Activated CD8-positive, alpha-beta T cell treated with anti-CD3 and anti-CD28 coated beads, Interleukin-2, amount 10 ng/mL, durations not matched to agents 7 days and 5 days (primary cell): ENCODE measurements at regions of chr1 and their contacts with region 1.

Region 1: GRCh38 chr1:159214149-159214760 is 9.6 kb downstream of the ACKR1 start:
- DNase-seq: peak; percentile 45
- ATAC-seq: no peak
- H3K4me3 Mint-ChIP-seq: no peak overlapping the region
- H3K27ac Mint-ChIP-seq: no peak overlapping the region
- H3K4me1 Mint-ChIP-seq: no peaks in the 10 kb centered on the region
- H3K27me3 Mint-ChIP-seq: peaks cover 12% of the 10 kb centered on the region

Region 2: DNA sequence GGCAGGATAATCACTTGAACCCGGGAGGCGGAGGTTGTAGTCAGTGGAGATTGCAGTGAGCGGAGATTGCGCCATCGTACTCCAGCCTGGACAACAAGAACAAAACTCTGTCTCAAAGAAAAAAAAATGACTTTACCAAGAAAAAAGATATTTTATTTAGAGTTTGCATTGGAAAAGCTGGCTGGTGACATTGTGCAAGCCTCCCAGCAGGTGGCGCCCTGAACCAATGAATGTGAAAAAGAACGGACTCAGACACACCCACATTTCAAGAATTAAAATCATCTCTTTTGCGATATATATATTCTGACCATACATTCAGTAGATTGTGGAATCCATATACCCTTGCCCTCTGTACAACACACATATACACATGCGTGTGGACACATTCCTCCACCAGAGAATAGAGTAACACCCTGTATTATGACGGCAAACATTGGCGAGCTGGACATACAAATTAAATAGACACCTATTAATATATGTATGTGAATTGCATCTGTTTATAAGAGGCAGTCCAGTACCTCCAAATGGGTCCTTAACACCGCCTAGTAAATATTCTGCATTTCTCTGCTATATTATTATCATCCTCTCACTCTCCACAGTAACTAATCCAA is 81.9 kb before region 1 on chr1:
- CTCF ChIA-PET with region 1: interaction called, 54 read pairs
- POLR2A ChIA-PET with region 1: no interaction called
- DNase-seq: peak; percentile 74
- ATAC-seq: no peak
- H3K4me3 Mint-ChIP-seq: no peak overlapping the region
- H3K27ac Mint-ChIP-seq: no peak overlapping the region
- H3K4me1 Mint-ChIP-seq: no peaks in the 10 kb centered on the region
- H3K27me3 Mint-ChIP-seq: peaks cover 4% of the 10 kb centered on the region

Region 3: GRCh38 chr1:159161001-159161718 is 53.1 kb before region 1 on chr1:
- CTCF ChIA-PET with region 1: interaction called, 29 read pairs
- POLR2A ChIA-PET with region 1: no interaction called
- DNase-seq: peak; percentile 68
- ATAC-seq: peak; percentile 84
- H3K4me3 Mint-ChIP-seq: no peak overlapping the region
- H3K27ac Mint-ChIP-seq: no peak overlapping the region
- H3K4me1 Mint-ChIP-seq: no peaks in the 10 kb centered on the region
- H3K27me3 Mint-ChIP-seq: peaks cover 40% of the 10 kb centered on the region

Region 4: DNA sequence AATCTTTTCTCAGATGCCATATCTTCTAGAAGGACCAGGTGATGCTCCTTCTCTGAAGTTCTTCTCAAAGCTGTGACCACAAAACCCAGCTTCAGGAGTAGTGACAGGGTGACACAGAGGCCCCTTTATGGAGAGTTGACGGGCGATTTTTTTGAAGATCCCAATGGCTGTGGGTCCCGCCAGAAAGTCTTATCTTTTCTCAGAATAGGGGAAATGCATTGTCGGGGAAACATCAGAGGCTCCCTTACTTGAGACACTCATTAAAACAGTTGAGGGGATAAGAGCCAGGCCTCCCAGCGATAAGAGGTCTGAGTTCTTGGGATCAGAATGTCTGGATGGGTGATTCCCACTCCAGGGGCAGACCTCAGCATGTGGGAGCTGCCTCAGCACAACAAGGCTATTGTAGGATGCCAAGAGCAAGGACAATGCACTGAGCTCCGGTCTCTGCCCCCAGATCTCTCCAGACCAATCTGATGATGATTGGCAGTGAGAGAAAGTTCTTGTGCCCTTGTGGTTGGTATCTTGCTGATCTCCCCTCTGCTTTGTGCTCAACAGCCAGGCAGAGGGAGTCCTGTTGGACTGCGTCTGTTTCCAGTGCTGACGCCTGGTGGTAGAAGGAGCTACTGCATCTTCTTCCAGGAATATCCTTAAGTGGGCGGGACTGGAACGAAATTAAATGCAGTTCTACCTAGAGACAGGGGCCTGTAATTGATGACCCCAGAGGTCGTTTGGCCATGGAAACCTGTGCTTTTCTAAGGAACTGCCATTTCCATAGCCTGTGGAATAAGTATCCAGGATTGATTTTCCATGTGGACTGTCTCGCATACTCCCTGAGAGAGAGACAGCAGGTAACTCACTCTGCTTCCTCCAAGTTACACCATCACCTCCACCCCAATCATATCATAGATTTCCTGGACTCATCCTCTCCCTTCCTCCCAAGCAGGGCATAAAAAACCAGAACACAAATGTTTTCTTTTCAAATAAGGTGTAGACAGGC is 16.4 kb before region 1 on chr1:
- CTCF ChIA-PET with region 1: interaction called, 36 read pairs
- POLR2A ChIA-PET with region 1: no interaction called
- DNase-seq: peak; percentile 63
- ATAC-seq: peak; percentile 78
- H3K4me3 Mint-ChIP-seq: no peak overlapping the region
- H3K27ac Mint-ChIP-seq: no peak overlapping the region
- H3K4me1 Mint-ChIP-seq: peaks cover 10% of the 10 kb centered on the region
- H3K27me3 Mint-ChIP-seq: peaks cover 20% of the 10 kb centered on the region

Region 5: DNA sequence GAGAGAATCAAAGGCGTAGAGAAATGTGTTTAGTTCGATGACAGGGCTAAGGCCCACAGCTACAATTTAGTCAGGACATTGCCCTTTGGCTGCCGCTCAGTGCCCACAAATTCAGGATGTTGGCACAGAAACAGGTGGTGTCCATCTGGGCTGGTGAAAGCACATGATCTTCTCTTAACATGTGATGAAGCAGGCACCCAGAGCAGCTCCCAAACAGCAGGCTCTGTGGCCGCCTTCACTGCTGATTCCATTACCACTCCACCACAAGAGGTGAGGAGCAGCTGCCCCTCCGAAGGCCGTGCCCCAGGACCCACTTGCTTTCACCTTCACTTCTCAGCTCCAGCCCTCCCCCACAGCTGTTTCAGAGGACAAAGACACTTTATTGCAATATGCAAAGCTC is 15.2 kb after region 1 on chr1:
- CTCF ChIA-PET with region 1: interaction called, 26 read pairs
- POLR2A ChIA-PET with region 1: no interaction called
- DNase-seq: no peak
- ATAC-seq: no peak
- H3K4me3 Mint-ChIP-seq: no peak overlapping the region
- H3K27ac Mint-ChIP-seq: no peak overlapping the region
- H3K4me1 Mint-ChIP-seq: no peaks in the 10 kb centered on the region
- H3K27me3 Mint-ChIP-seq: peaks cover 10% of the 10 kb centered on the region

Region 6: GRCh38 chr1:159291424-159291823 is 77.2 kb after region 1 on chr1:
- CTCF ChIA-PET with region 1: no interaction called
- POLR2A ChIA-PET with region 1: no interaction called
- DNase-seq: no peak
- ATAC-seq: no peak
- H3K4me3 Mint-ChIP-seq: no peak overlapping the region
- H3K27ac Mint-ChIP-seq: no peak overlapping the region
- H3K4me1 Mint-ChIP-seq: no peaks in the 10 kb centered on the region
- H3K27me3 Mint-ChIP-seq: peaks cover 11% of the 10 kb centered on the region